CD4-positive, alpha-beta memory T cell (primary cell): ENCODE measurements at regions of chr6 and their contacts with region 1.

Region 1: DNA sequence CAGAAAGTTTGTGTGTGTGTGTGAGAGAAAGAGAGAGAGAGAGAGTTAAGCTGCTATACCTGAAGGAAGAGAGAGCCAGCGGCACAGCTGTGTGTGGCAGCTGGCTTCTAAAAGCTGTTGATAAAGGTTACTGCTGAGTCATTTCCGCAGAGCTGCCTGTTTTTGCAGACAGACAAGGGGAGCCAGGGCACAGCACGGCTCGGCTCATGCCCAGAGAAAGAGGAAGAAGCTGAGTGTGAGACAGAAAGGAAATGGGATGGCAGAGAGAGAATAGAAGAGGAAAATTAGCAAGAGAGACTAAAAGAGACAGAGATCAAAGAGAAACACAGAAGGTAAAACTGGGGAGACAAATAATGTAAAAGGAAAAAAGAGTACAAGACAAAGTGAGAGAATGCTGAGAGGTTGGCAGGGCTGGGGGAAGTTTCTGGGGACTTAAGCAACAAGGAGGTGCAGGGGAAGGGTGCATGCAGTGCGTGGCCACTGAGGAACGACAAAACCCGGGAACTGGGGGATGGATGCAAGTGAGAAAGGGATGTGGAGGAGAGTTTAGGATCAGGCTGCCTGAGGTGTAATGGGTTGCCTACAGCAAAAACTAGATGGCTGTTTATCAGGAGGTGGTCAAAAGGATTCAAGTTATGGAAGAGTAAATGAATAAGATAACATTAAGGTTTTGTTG is 22.7 kb downstream of the HLA-A start:
- DNase-seq: peak; percentile 77 to 94 (median 84)
- H3K4me3 ChIP-seq: peak overlapping the region; percentile 24 to 57
- H3K4me3 Mint-ChIP-seq: peak overlapping the region; percentile 82 to 96 (median 89)
- H3K27ac ChIP-seq: peak overlapping the region; percentile 65
- H3K27ac Mint-ChIP-seq: peak overlapping the region; percentile 89 to 99 (median 93)
- H3K4me1 ChIP-seq: peaks cover 50% of the 10 kb centered on the region
- H3K4me1 Mint-ChIP-seq: peaks cover 37 to 54% (median 46%) of the 10 kb centered on the region in 4 donors
- H3K27me3 ChIP-seq: no peaks in the 10 kb centered on the region
- H3K27me3 Mint-ChIP-seq: no peaks in the 10 kb centered on the region

Region 2: DNA sequence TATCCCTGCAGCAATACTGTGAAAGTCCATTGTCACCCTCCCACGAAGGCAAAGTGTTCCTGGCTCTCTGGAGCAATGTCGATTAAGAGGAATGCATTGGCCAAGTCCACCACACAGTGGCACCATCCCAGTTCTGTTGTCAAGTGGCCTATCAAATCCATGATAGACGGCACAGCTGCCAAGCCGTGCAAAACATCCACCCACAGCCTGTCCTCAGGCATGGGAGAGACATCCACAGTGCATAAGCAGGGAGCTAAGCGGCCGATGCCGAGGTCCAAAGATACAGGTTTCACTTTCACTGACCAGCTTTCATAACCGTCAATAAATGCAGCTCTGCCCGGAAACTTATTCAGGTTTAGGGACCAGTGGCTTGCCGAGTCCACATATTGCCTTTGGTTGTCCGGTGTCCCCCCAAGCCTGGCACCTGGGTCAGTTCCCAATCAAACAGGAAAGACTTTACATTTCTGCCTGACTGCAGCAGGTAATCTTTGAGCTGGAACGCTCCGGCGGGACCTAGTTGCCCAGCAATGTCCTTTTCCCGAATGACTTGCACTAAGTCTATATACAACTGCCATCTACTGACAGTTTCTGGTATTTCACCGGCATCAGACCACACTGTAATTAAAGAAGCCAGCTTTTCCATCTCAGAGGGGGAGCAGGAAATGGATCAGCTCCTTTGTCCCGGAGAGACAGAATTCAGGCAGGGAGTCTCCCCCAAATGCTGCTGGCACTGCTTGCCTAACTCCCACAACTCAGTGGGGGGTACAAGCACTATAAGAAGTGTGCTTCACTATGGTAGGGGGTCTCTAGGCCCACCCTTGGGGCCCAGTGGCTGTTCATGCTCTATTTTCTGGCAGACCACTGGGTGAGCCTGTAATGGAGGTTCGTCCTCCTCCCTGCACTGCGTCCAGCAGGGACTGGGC is 1609.0 kb before region 1 on chr6:
- CTCF ChIA-PET with region 1: no interaction called
- POLR2A ChIA-PET with region 1: no interaction called
- intact Hi-C with region 1: no loop called
- DNase-seq: peak; percentile 59 to 68 (median 66)
- H3K4me3 ChIP-seq: peak overlapping the region; percentile 43 to 70
- H3K4me3 Mint-ChIP-seq: peak overlapping the region; percentile 86 to 95 (median 91)
- H3K27ac ChIP-seq: peak overlapping the region; percentile 50
- H3K27ac Mint-ChIP-seq: peak overlapping the region in 6 of 7 donors; percentile 40 to 91 (median 88)
- H3K4me1 ChIP-seq: peaks cover 21% of the 10 kb centered on the region
- H3K4me1 Mint-ChIP-seq: peaks cover 17 to 29% (median 25%) of the 10 kb centered on the region in 4 donors
- H3K27me3 ChIP-seq: no peaks in the 10 kb centered on the region
- H3K27me3 Mint-ChIP-seq: no peaks in the 10 kb centered on the region

Region 3: GRCh38 chr6:29705389-29706231 is 259.4 kb before region 1 on chr6:
- CTCF ChIA-PET with region 1: no interaction called
- POLR2A ChIA-PET with region 1: interaction called, 5 read pairs
- intact Hi-C with region 1: loop called (anchors 5 kb)
- DNase-seq: peak in 2 of 5 donors; percentile 48 to 51
- H3K4me3 ChIP-seq: no peak overlapping the region
- H3K4me3 Mint-ChIP-seq: peak overlapping the region in 4 of 8 donors; percentile 33 to 64 (median 44)
- H3K27ac ChIP-seq: no peak overlapping the region
- H3K27ac Mint-ChIP-seq: peak overlapping the region; percentile 63 to 90 (median 83)
- H3K4me1 ChIP-seq: peaks cover 54% of the 10 kb centered on the region
- H3K4me1 Mint-ChIP-seq: peaks cover 38 to 58% (median 51%) of the 10 kb centered on the region in 4 donors
- H3K27me3 ChIP-seq: no peaks in the 10 kb centered on the region
- H3K27me3 Mint-ChIP-seq: peaks cover 6 to 15% of the 10 kb centered on the region in 2 donors

Region 4: DNA sequence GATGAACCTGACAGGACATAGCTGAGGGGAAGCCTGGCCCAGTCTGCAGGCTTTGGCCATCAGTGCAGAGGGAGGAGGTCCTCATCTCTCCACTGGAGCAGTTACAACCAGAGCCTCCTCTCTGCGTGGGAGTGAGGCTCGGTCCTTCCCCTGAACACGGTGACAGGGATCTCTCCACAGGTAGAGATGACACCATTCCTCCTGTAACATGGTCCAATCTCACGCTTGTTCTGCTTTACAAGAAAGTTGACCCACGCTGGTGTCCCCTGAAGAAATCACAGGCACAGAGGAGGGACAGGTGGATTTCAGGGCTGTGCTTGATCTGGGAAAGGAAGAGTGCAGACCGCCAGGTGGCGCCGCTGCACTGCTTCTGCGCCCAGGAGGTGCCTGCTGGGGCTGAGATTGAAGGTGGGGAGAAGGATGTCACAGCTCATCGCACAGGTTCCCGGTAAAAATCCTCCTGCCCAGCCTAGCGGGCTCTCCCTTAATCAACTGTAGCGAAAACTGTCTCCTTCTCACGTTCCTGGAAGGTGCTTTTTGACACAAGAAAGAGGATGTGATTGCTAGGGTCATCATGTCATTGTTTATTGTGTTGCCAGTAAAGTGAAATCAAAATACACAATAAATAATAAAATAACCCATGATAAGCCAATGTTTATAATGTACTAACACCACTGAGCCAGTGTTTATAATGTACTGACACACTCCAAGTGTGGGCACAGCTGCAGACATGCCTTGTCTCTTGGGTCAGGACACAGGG is 117.0 kb before region 1 on chr6:
- CTCF ChIA-PET with region 1: interaction called, 26 read pairs
- POLR2A ChIA-PET with region 1: interaction called, 6 read pairs
- intact Hi-C with region 1: loop called (anchors 1 kb)
- DNase-seq: peak; percentile 73 to 83 (median 79)
- H3K4me3 ChIP-seq: no peak overlapping the region
- H3K4me3 Mint-ChIP-seq: peak overlapping the region in 2 of 8 donors; percentile 29 to 61
- H3K27ac ChIP-seq: no peak overlapping the region
- H3K27ac Mint-ChIP-seq: no peak overlapping the region
- H3K4me1 ChIP-seq: no peaks in the 10 kb centered on the region
- H3K4me1 Mint-ChIP-seq: peaks cover 9 to 16% (median 14%) of the 10 kb centered on the region in 4 donors
- H3K27me3 ChIP-seq: peaks cover 22% of the 10 kb centered on the region
- H3K27me3 Mint-ChIP-seq: peaks cover 25 to 47% of the 10 kb centered on the region in 2 donors

Region 5: GRCh38 chr6:29917857-29918256 is 47.2 kb before region 1 on chr6:
- CTCF ChIA-PET with region 1: no interaction called
- POLR2A ChIA-PET with region 1: no interaction called
- intact Hi-C with region 1: loop called (anchors 2 kb)
- DNase-seq: no peak
- H3K4me3 ChIP-seq: no peak overlapping the region
- H3K4me3 Mint-ChIP-seq: no peak overlapping the region
- H3K27ac ChIP-seq: no peak overlapping the region
- H3K27ac Mint-ChIP-seq: no peak overlapping the region
- H3K4me1 ChIP-seq: no peaks in the 10 kb centered on the region
- H3K4me1 Mint-ChIP-seq: no peaks in the 10 kb centered on the region
- H3K27me3 ChIP-seq: no peaks in the 10 kb centered on the region
- H3K27me3 Mint-ChIP-seq: no peaks in the 10 kb centered on the region

Region 6: GRCh38 chr6:29942275-29943052 is 22.6 kb before region 1 on chr6 and contains the start of gene HLA-A:
- CTCF ChIA-PET with region 1: no interaction called
- POLR2A ChIA-PET with region 1: interaction called, 118 read pairs
- intact Hi-C with region 1: loop called (anchors 1 kb)
- DNase-seq: peak; percentile 90 to 98 (median 95)
- H3K4me3 ChIP-seq: peak within 1 kb of the TSS; percentile 62 to 78
- H3K4me3 Mint-ChIP-seq: peak within 1 kb of the TSS; percentile 95 to 100 (median 99)
- H3K27ac ChIP-seq: peak within 1 kb of the TSS; percentile 100
- H3K27ac Mint-ChIP-seq: peak within 1 kb of the TSS; percentile 100
- H3K4me1 ChIP-seq: peaks cover 46% of the 10 kb centered on the region
- H3K4me1 Mint-ChIP-seq: peaks cover 29 to 72% (median 44%) of the 10 kb centered on the region in 4 donors
- H3K27me3 ChIP-seq: no peaks in the 10 kb centered on the region
- H3K27me3 Mint-ChIP-seq: peaks cover 0 to 3% of the 10 kb centered on the region in 2 donors
- total RNA-seq, gene HLA-A: 2,115 to 2,200 TPM

Region 7: GRCh38 chr6:29976588-29977424 is 11.8 kb after region 1 on chr6:
- CTCF ChIA-PET with region 1: interaction called, 5 read pairs
- POLR2A ChIA-PET with region 1: interaction called, 31 read pairs
- intact Hi-C with region 1: loop called (anchors 1 kb)
- DNase-seq: peak; percentile 41 to 60 (median 55)
- H3K4me3 ChIP-seq: peak overlapping the region; percentile 52 to 54
- H3K4me3 Mint-ChIP-seq: peak overlapping the region; percentile 87 to 96 (median 94)
- H3K27ac ChIP-seq: no peak overlapping the region
- H3K27ac Mint-ChIP-seq: peak overlapping the region in 5 of 7 donors; percentile 29 to 88 (median 74)
- H3K4me1 ChIP-seq: peaks cover 25% of the 10 kb centered on the region
- H3K4me1 Mint-ChIP-seq: peaks cover 30 to 34% (median 31%) of the 10 kb centered on the region in 4 donors
- H3K27me3 ChIP-seq: peaks cover 17% of the 10 kb centered on the region
- H3K27me3 Mint-ChIP-seq: peaks cover 22 to 41% of the 10 kb centered on the region in 2 donors

Region 8: DNA sequence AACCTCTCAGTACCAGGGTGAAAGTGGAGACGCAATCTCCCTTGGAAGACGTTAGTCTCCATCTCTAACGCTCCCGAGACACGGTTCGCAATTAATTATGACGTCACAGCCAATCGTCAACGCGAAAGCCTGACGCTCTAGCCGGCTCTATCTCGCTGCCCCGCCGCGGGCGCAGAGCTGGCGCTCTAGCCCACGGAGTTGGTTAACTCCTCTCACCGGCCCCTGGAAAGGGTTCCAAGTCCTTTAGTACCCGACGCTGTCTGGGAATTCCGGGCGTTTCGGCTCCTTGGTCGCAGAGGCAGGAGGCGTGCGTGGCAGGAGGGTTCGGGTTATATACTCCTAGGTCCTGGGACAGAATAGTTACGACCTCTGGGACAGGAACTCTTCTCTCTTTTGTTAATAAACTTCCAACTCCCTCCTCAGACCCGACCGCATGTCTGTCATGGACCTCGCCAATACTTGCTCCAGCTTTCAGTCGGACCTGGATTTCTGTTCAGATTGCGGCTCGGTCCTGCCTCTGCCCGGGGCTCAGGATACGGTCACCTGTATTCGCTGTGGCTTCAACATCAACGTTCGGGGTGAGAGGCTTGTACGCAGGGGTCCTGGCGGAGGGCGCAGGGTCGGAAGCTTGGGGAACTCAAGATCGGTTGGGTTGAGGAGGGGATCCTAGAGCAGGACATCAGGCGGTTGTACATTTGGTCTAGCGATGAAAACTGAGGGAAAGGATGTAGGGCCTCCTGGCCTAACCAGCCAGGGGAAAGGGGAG is 96.2 kb after region 1 on chr6 and contains the start of gene POLR1H:
- CTCF ChIA-PET with region 1: no interaction called
- POLR2A ChIA-PET with region 1: interaction called, 15 read pairs
- intact Hi-C with region 1: loop called (anchors 2 kb)
- DNase-seq: peak; percentile 87 to 93 (median 88)
- H3K4me3 ChIP-seq: peak within 1 kb of the TSS; percentile 62 to 96
- H3K4me3 Mint-ChIP-seq: peak within 1 kb of the TSS; percentile 96 to 99 (median 98)
- H3K27ac ChIP-seq: peak within 1 kb of the TSS; percentile 92
- H3K27ac Mint-ChIP-seq: peak within 1 kb of the TSS; percentile 97 to 100 (median 99)
- H3K4me1 ChIP-seq: peaks cover 41% of the 10 kb centered on the region
- H3K4me1 Mint-ChIP-seq: peaks cover 16 to 49% (median 29%) of the 10 kb centered on the region in 4 donors
- H3K27me3 ChIP-seq: no peaks in the 10 kb centered on the region
- H3K27me3 Mint-ChIP-seq: no peaks in the 10 kb centered on the region
- total RNA-seq, gene POLR1H: 47.2 to 50.0 TPM